H1 (cell line): ENCODE measurements at regions of chr3 and their contacts with region 1.

Region 1: GRCh38 chr3:187319699-187320302 is 28.3 kb upstream of the MASP1 start:
- DNase-seq: peak; percentile 72 to 94
- H3K4me3 ChIP-seq: no peak overlapping the region
- H3K27ac ChIP-seq: no peak overlapping the region
- H3K4me1 ChIP-seq: peaks cover 0 to 4% (median 2%) of the 10 kb centered on the region in 4 experiments; a peak in 4 of 7 replicates
- H3K27me3 ChIP-seq: no peaks in the 10 kb centered on the region; a peak in 1 of 7 replicates
- CTCF ChIP-seq: peak; percentile 76 to 97 (median 95)
- EP300 ChIP-seq: no peak
- POLR2A ChIP-seq: no peak
- RAD21 ChIP-seq: peak; percentile 99 to 100

Region 2: GRCh38 chr3:187210545-187211327 is 109.1 kb before region 1 on chr3:
- CTCF ChIA-PET with region 1: interaction called, 236 read pairs
- POLR2A ChIA-PET with region 1: no interaction called
- DNase-seq: no peak
- H3K4me3 ChIP-seq: no peak overlapping the region
- H3K27ac ChIP-seq: no peak overlapping the region
- H3K4me1 ChIP-seq: peaks cover 3 to 14% (median 7%) of the 10 kb centered on the region in 4 experiments; a peak in 4 of 7 replicates
- H3K27me3 ChIP-seq: no peaks in the 10 kb centered on the region
- CTCF ChIP-seq: no peak
- EP300 ChIP-seq: no peak
- POLR2A ChIP-seq: no peak
- RAD21 ChIP-seq: no peak

Region 3: DNA sequence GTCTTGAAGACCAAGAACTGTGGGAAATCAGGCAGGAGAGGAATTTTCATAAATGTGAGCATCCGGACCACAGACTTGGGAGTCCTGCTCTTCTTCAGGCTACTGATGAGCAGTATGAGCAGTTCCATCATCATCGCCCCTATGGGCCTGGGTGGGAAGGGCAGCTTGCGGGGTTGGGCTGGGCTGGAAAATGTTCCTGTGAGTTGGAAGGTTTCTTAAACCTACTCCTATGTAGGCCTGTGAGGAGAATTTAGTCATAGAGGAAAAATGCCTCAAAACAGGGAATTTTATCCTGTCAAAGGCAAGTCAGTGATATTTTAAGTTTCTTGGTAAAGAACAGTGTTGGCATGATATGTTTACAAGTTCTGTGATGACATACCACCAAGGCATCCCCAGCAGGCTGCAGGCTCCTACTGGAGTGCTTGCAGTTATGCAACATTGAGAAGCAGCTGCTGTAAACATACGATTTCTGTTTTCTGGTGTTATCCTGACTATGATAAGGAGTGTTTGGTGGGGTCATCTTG is 38.5 kb before region 1 on chr3:
- CTCF ChIA-PET with region 1: interaction called, 26 read pairs
- POLR2A ChIA-PET with region 1: no interaction called
- DNase-seq: no peak
- H3K4me3 ChIP-seq: no peak overlapping the region
- H3K27ac ChIP-seq: no peak overlapping the region
- H3K4me1 ChIP-seq: peaks cover 0 to 4% (median 0%) of the 10 kb centered on the region in 4 experiments; a peak in 1 of 7 replicates
- H3K27me3 ChIP-seq: no peaks in the 10 kb centered on the region
- CTCF ChIP-seq: peak; percentile 16 to 59 (median 54); a peak in 3 of 4 replicates
- EP300 ChIP-seq: no peak
- POLR2A ChIP-seq: no peak
- RAD21 ChIP-seq: peak; percentile 9 to 25; a peak in 1 of 4 replicates

Region 4: GRCh38 chr3:187382609-187383151 is 62.9 kb after region 1 on chr3:
- CTCF ChIA-PET with region 1: interaction called, 40 read pairs
- POLR2A ChIA-PET with region 1: no interaction called
- DNase-seq: no peak
- H3K4me3 ChIP-seq: no peak overlapping the region
- H3K27ac ChIP-seq: no peak overlapping the region
- H3K4me1 ChIP-seq: no peaks in the 10 kb centered on the region
- H3K27me3 ChIP-seq: no peaks in the 10 kb centered on the region
- CTCF ChIP-seq: no peak
- EP300 ChIP-seq: no peak
- POLR2A ChIP-seq: no peak
- RAD21 ChIP-seq: no peak

Region 5: GRCh38 chr3:187498211-187498724 is 178.5 kb after region 1 on chr3:
- CTCF ChIA-PET with region 1: interaction called, 14 read pairs
- POLR2A ChIA-PET with region 1: no interaction called
- DNase-seq: no peak
- H3K4me3 ChIP-seq: no peak overlapping the region
- H3K27ac ChIP-seq: no peak overlapping the region
- H3K4me1 ChIP-seq: no peaks in the 10 kb centered on the region
- H3K27me3 ChIP-seq: no peaks in the 10 kb centered on the region
- CTCF ChIP-seq: no peak
- EP300 ChIP-seq: no peak
- POLR2A ChIP-seq: no peak
- RAD21 ChIP-seq: no peak

Region 6: GRCh38 chr3:187623285-187623814 is 303.5 kb after region 1 on chr3:
- CTCF ChIA-PET with region 1: interaction called, 34 read pairs
- POLR2A ChIA-PET with region 1: no interaction called
- DNase-seq: no peak
- H3K4me3 ChIP-seq: no peak overlapping the region
- H3K27ac ChIP-seq: no peak overlapping the region
- H3K4me1 ChIP-seq: peaks cover 4 to 14% (median 10%) of the 10 kb centered on the region in 4 experiments
- H3K27me3 ChIP-seq: peaks cover 2 to 31% (median 22%) of the 10 kb centered on the region in 4 experiments; a peak in 5 of 7 replicates
- CTCF ChIP-seq: no peak
- EP300 ChIP-seq: no peak
- POLR2A ChIP-seq: no peak
- RAD21 ChIP-seq: no peak

Region 7: GRCh38 chr3:187714404-187714979 is 394.7 kb after region 1 on chr3:
- CTCF ChIA-PET with region 1: interaction called, 280 read pairs
- POLR2A ChIA-PET with region 1: interaction called, 5 read pairs
- DNase-seq: peak in 1 of 2 experiments; percentile 86
- H3K4me3 ChIP-seq: no peak overlapping the region
- H3K27ac ChIP-seq: no peak overlapping the region
- H3K4me1 ChIP-seq: peaks cover 0 to 4% (median 4%) of the 10 kb centered on the region in 4 experiments; a peak in 4 of 7 replicates
- H3K27me3 ChIP-seq: no peaks in the 10 kb centered on the region
- CTCF ChIP-seq: peak; percentile 64 to 92 (median 92)
- EP300 ChIP-seq: no peak
- POLR2A ChIP-seq: no peak
- RAD21 ChIP-seq: peak; percentile 99